Activated T-helper 2 cell treated with anti-CD3 and anti-CD28 coated beads, Interferon-gamma antibody, Interleukin-2, Interleukin-4, amounts not matched to agents 10 μg/mL and 5 μg/mL and 100 μg/mL, durations not matched to agents 14 hours and 24 hours and 36 hours (primary cell): ENCODE measurements at regions of chr3 and their contacts with region 1.

Region 1: DNA sequence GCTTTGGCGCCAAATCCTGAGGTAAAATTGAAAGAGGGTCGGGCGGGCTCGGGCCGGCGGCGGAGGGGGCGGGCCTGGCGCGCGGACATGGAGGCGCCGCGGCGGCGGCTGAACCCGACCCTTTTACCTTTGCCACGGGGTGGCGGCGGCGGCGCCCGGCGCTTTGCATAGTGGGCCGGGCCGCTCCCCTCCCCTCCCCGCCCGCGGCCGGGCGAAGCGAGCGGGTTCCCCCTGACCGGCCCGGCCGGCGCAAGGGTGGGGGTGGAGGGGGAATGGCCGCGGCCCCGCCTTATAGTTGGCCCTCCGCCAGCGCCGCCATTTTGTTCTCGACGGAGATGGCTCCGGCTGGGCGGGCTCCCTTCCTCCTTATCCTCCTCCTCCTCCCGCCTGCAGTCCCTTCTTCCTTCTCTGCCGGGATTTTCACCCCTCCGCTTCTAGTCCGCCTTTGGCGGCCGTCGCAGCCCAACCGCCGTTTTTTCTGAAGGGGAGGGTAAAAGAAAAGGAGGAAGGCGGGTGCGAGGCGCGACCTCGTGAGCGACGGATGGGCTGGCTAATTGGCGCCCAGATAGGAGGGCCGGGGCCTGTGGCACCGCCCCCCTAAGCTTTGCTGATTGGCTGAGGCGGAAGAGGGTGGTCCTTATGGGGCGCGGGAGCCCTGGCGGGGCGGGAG is 638 bp downstream of the NR2C2 start:
- DNase-seq: peak; percentile 94
- H3K4me3 Mint-ChIP-seq: peak overlapping the region; percentile 99
- H3K27ac Mint-ChIP-seq: peak overlapping the region; percentile 100
- H3K4me1 Mint-ChIP-seq: peaks cover 36% of the 10 kb centered on the region
- H3K27me3 Mint-ChIP-seq: no peaks in the 10 kb centered on the region

Region 2: GRCh38 chr3:14124615-14125190 is 823.3 kb before region 1 on chr3 and contains the starts of genes CHCHD4 and TMEM43:
- intact Hi-C with region 1: loop called (anchors 1 kb)
- DNase-seq: peak; percentile 98
- H3K4me3 Mint-ChIP-seq: peak within 1 kb of the TSS; percentile 97
- H3K27ac Mint-ChIP-seq: peak within 1 kb of the TSS; percentile 93
- H3K4me1 Mint-ChIP-seq: peaks cover 40% of the 10 kb centered on the region
- H3K27me3 Mint-ChIP-seq: no peaks in the 10 kb centered on the region
- total RNA-seq, gene CHCHD4: 24.8 and 25.0 TPM in 2 replicates
- total RNA-seq, gene TMEM43: 36.7 and 39.2 TPM in 2 replicates

Region 3: GRCh38 chr3:14402304-14402811 is 545.7 kb before region 1 on chr3 and contains the start of gene SLC6A6:
- intact Hi-C with region 1: loop called (anchors 1 kb)
- DNase-seq: peak; percentile 91
- H3K4me3 Mint-ChIP-seq: peak within 1 kb of the TSS; percentile 93
- H3K27ac Mint-ChIP-seq: peak within 1 kb of the TSS; percentile 95
- H3K4me1 Mint-ChIP-seq: peaks cover 35% of the 10 kb centered on the region
- H3K27me3 Mint-ChIP-seq: no peaks in the 10 kb centered on the region
- total RNA-seq, gene SLC6A6: 55.1 and 55.8 TPM in 2 replicates

Region 4: DNA sequence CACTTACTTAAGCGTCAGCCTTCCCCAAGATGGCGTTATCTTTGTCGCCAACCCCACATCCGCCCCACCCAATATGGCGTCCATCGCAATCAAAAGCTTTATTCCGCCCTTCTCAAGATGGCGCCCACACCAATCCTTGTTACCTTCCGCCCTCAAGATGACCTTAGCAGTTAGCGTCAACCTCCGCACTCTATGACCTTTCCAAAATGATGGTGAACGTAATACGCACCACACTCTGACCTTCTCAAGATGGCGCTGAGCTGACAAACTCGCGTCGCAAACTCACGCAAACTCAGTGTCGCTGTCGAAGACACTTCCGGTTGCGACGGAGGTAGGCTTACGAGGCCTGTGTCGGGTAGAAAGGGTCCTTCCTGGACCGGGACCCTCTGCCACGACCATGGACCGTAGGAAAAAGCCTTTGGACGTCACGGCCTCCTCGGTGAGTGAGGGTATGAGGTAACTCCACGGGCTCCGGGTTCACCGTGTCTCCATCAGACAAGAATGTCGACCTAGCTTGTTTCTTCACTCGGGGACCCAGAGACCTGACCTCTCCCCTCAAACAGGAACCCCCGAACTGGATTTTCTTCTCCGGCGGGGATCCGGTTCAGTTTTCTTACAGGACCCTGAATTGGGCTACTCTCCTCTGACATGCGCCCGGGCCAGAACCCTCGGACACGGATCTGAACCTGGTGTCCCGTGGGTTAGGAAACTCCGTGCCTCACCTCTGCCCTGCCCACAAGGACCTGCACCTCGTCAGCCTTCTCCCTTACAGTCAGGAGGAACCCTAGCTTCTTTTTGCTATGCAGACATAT is 296.4 kb before region 1 on chr3 and contains the start of gene CCDC174:
- intact Hi-C with region 1: loop called (anchors 1 kb)
- DNase-seq: peak; percentile 94
- H3K4me3 Mint-ChIP-seq: peak within 1 kb of the TSS; percentile 92
- H3K27ac Mint-ChIP-seq: peak within 1 kb of the TSS; percentile 95
- H3K4me1 Mint-ChIP-seq: peaks cover 30% of the 10 kb centered on the region
- H3K27me3 Mint-ChIP-seq: no peaks in the 10 kb centered on the region
- total RNA-seq, gene CCDC174: 15.0 and 18.8 TPM in 2 replicates

Region 5: DNA sequence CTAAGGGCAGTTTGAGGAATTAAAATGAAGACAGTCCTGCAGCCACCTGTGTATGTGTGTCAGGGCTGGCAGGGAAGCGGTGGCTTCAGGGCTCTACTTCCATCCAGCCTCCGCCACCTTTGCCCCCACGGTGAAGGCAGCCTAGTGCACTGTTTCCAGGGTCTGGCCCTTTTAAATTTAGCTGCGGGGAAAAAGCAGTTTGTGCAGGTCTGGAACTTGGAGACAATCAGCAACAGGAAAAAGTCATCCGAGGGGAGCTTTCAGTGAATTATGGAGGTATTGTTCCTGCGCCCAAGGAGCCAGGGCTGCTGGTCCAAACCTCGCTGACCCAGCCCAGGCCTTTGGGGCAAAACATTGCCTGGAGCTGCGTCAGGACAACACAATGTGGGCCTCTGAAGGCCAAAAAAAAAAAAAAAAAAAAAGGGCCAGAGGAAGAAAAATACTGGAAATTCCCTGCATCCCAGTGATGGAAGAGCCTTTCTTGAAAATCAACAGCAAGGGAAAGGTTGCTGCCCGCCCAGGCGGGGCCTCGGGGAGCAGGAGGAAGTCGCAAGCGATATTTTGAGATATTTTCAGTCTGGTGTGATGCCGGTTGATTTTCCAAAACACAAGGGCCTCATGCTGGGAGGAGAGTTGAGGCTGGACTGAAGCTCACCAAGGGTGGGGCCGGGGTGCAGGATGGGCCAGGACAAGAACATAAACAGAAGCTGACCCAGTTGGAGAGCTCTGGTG is 154.7 kb before region 1 on chr3:
- intact Hi-C with region 1: no loop called
- DNase-seq: no peak
- H3K4me3 Mint-ChIP-seq: no peak overlapping the region
- H3K27ac Mint-ChIP-seq: no peak overlapping the region
- H3K4me1 Mint-ChIP-seq: no peaks in the 10 kb centered on the region
- H3K27me3 Mint-ChIP-seq: peaks cover 1% of the 10 kb centered on the region

Region 6: DNA sequence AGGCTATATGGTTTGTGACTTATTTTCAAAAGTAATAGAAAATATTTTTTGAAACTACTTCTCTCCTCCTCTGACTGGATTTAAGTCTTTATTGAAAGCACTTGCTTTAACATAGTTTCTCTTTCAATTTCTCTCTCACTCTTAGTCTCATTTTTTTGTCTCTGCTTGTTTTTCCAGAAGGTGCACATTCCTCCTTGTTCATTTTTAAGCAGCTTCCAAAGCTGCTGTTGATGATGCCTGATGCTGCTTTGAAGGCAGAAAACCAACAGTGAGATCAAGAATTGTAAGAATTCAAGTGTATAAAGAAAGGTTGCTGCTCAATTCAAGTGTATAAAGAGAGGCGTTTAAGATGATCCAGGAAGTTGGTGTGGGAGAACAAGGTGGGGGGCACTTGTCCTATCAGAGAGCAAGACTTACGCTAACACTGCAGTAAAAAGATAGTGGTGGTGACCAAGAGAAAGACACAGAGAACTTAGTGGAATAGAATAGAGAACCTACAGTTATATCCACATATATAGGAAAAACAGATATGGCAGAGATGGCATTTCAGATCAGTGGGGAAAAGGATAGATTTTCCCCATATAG is 11.4 kb after region 1 on chr3:
- intact Hi-C with region 1: no loop called
- DNase-seq: no peak
- H3K4me3 Mint-ChIP-seq: peak overlapping the region; percentile 72
- H3K27ac Mint-ChIP-seq: peak overlapping the region; percentile 80
- H3K4me1 Mint-ChIP-seq: peaks cover 43% of the 10 kb centered on the region
- H3K27me3 Mint-ChIP-seq: no peaks in the 10 kb centered on the region

Region 7: GRCh38 chr3:15064835-15065549 is 117.0 kb after region 1 on chr3 and contains the start of gene MRPS25:
- intact Hi-C with region 1: loop called (anchors 1 kb)
- DNase-seq: peak; percentile 88
- H3K4me3 Mint-ChIP-seq: peak within 1 kb of the TSS; percentile 94
- H3K27ac Mint-ChIP-seq: peak within 1 kb of the TSS; percentile 93
- H3K4me1 Mint-ChIP-seq: peaks cover 20% of the 10 kb centered on the region
- H3K27me3 Mint-ChIP-seq: no peaks in the 10 kb centered on the region
- total RNA-seq, gene MRPS25: 83.9 and 91.6 TPM in 2 replicates

Region 8: GRCh38 chr3:15098503-15099363 is 150.7 kb after region 1 on chr3 and contains the start of gene RBSN:
- intact Hi-C with region 1: loop called (anchors 2 kb)
- DNase-seq: peak; percentile 96
- H3K4me3 Mint-ChIP-seq: peak within 1 kb of the TSS; percentile 91
- H3K27ac Mint-ChIP-seq: peak within 1 kb of the TSS; percentile 94
- H3K4me1 Mint-ChIP-seq: peaks cover 12% of the 10 kb centered on the region
- H3K27me3 Mint-ChIP-seq: peaks cover 2% of the 10 kb centered on the region
- total RNA-seq, gene RBSN: 11.3 and 13.0 TPM in 2 replicates

Region 9: GRCh38 chr3:15601397-15602145 is 653.5 kb after region 1 on chr3 and contains the starts of genes BTD and HACL1:
- intact Hi-C with region 1: loop called (anchors 1 kb)
- DNase-seq: peak; percentile 99
- H3K4me3 Mint-ChIP-seq: peak within 1 kb of the TSS; percentile 100
- H3K27ac Mint-ChIP-seq: peak within 1 kb of the TSS; percentile 99
- H3K4me1 Mint-ChIP-seq: peaks cover 28% of the 10 kb centered on the region
- H3K27me3 Mint-ChIP-seq: no peaks in the 10 kb centered on the region
- total RNA-seq, gene BTD: 3.9 and 4.8 TPM in 2 replicates
- total RNA-seq, gene HACL1: 22.8 TPM in 2 replicates